ENCODE measurements at regions of chr18 and their contacts with region 1.

Region 1: DNA sequence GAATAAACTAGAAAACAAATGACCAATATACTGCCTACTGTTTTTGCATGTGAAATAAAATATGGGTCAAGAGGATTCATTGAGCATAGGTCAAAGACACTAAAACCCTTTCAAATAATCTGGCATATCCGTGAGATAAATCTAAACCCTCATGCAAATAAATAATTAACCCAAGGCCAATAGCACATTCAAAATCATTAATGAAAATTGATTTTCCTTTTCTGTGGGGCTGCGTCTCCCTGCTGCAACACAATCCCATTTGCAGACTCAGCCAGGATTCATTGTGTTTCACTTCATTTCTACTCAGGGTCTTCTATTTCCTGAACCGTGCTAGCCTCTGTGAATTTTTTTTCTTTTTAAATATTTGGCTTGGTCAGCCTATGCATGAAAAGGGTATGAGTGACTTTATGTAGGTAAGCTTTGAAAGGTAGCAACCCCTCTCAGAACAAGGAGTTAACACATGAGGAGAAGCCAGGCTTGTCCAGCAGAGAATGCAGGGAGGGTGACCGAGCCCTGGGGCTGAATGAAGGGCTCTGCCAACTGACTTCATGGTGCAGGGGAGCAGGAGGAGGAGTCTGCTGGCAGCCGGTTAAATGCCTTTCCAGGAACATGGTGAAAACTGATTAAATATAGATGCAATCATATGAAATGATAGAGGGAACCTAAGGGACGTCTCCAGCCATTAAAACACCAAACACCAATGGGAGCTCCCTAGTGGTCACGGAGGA is 10.3 kb upstream of the CTAGE1 start:
- DNase-seq: no peak
- H3K4me3 Mint-ChIP-seq: no peak overlapping the region
- H3K27ac Mint-ChIP-seq: no peak overlapping the region
- H3K4me1 Mint-ChIP-seq: no peaks in the 10 kb centered on the region
- H3K27me3 Mint-ChIP-seq: no peaks in the 10 kb centered on the region

Region 2: GRCh38 chr18:22403950-22404349 is 24.0 kb before region 1 on chr18:
- CTCF ChIA-PET with region 1: interaction called, 3 read pairs
- POLR2A ChIA-PET with region 1: no interaction called
- intact Hi-C with region 1: loop called (anchors 2 kb)
- DNase-seq: no peak
- H3K4me3 Mint-ChIP-seq: no peak overlapping the region
- H3K27ac Mint-ChIP-seq: no peak overlapping the region
- H3K4me1 Mint-ChIP-seq: no peaks in the 10 kb centered on the region
- H3K27me3 Mint-ChIP-seq: no peaks in the 10 kb centered on the region